AG04450 (cell line): ENCODE measurements at regions of chr18 and their contacts with region 1.

Region 1: DNA sequence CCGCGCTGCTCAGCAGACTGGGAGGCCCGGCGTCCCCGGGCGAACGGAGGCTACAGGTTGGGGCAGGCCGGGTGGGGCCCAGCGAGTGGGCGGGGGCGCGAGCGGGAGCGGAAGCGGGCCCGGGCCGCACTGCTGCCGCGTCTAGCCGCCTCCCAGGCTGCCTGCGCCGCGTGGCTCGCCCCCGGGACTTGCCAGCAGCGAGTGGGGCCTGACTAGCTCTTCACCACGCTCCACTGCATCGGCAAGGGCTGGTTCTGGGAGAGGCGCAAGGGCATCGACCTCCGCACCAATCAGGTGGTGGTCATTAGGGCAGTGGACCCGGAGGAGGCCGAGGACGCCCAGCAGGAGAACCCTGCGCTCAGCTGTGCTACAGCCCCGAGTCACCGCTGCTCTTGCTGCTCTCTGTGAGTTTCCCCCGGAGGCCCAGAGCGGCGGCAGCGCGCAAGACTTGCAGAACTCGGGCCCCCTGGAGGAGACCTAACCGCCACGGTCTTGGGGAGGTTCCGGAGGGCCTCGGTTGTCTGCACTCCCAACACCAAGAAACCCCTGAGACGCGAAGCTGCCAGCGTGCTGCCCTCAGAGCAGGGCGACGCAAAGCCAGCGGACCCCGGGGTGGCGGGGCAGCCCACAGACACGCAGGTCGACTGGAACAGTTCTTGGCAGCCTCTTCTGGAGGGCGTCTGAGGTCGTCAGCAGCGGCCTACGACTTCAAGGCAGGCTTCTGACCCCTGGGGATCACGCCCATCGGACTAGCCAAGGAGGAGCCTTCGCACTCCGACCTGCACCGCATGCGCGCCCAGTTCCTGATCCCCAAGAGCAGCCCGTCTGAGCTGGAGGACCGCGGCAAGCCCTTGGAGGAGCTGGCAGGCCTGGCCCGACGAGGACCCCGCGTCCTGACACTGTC is 27.2 kb upstream of the PTPN2 start:
- DNase-seq: no peak
- H3K4me3 ChIP-seq: no peak overlapping the region
- H3K27ac ChIP-seq: no peak overlapping the region
- H3K27me3 ChIP-seq: peaks cover 14% of the 10 kb centered on the region
- CTCF ChIP-seq: no peak

Region 2: GRCh38 chr18:12828116-12829051 is 82.9 kb before region 1 on chr18:
- CTCF ChIA-PET with region 1: no interaction called
- POLR2A ChIA-PET with region 1: no interaction called
- DNase-seq: no peak
- H3K4me3 ChIP-seq: no peak overlapping the region
- H3K27ac ChIP-seq: peak overlapping the region; percentile 47
- H3K27me3 ChIP-seq: no peaks in the 10 kb centered on the region
- CTCF ChIP-seq: no peak

Region 3: GRCh38 chr18:13048061-13048595 is 136.9 kb after region 1 on chr18:
- CTCF ChIA-PET with region 1: no interaction called
- POLR2A ChIA-PET with region 1: no interaction called
- DNase-seq: no peak
- H3K4me3 ChIP-seq: no peak overlapping the region
- H3K27ac ChIP-seq: no peak overlapping the region
- H3K27me3 ChIP-seq: no peaks in the 10 kb centered on the region
- CTCF ChIP-seq: no peak

Region 4: GRCh38 chr18:14120926-14121325 is 1209.6 kb after region 1 on chr18:
- CTCF ChIA-PET with region 1: no interaction called
- POLR2A ChIA-PET with region 1: interaction called, 11 read pairs
- DNase-seq: no peak
- H3K4me3 ChIP-seq: no peak overlapping the region
- H3K27ac ChIP-seq: no peak overlapping the region
- H3K27me3 ChIP-seq: no peaks in the 10 kb centered on the region
- CTCF ChIP-seq: no peak